HEK293 (cell line): ENCODE measurements at regions of chr1 and their contacts with region 1.

Region 1: GRCh38 chr1:162357681-162358266 is 18.9 kb downstream of the SPATA46 start:
- H3K4me3 ChIP-seq: no peak overlapping the region
- H3K27ac ChIP-seq: no peak overlapping the region
- H3K4me1 ChIP-seq: no peaks in the 10 kb centered on the region
- CTCF ChIP-seq: peak; percentile 16; the same call in 1 of the 2 replicates

Region 2: DNA sequence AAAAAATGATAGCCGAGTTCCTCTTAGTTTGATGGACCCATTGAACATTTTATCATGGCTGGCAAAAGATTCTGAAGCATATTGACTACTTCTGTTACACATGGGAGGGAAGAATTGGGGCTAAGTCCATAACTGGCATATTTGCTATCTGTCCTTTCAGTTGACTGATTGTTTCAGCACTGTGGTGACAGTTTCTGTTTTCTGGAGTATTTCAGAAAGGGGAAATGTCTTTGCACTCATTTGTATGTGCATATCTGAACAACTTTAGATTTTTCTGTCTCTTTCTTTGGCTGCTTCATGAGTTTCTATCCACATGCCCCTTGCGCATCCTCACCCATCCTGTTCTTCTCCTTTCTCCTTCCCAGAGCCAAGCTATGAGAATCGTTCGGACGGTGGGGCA is 14.3 kb before region 1 on chr1:
- CTCF ChIA-PET with region 1: interaction called, 12 read pairs
- POLR2A ChIA-PET with region 1: no interaction called
- H3K4me3 ChIP-seq: no peak overlapping the region
- H3K27ac ChIP-seq: no peak overlapping the region
- H3K4me1 ChIP-seq: no peaks in the 10 kb centered on the region; the same call in 1 of the 2 replicates
- CTCF ChIP-seq: no peak

Region 3: GRCh38 chr1:162376691-162377090 is 18.9 kb after region 1 on chr1 and contains the start of gene SPATA46:
- CTCF ChIA-PET with region 1: interaction called, 12 read pairs
- POLR2A ChIA-PET with region 1: no interaction called
- H3K4me3 ChIP-seq: no peak within 1 kb of the TSS
- H3K27ac ChIP-seq: no peak within 1 kb of the TSS
- H3K4me1 ChIP-seq: no peaks in the 10 kb centered on the region
- CTCF ChIP-seq: no peak

Region 4: DNA sequence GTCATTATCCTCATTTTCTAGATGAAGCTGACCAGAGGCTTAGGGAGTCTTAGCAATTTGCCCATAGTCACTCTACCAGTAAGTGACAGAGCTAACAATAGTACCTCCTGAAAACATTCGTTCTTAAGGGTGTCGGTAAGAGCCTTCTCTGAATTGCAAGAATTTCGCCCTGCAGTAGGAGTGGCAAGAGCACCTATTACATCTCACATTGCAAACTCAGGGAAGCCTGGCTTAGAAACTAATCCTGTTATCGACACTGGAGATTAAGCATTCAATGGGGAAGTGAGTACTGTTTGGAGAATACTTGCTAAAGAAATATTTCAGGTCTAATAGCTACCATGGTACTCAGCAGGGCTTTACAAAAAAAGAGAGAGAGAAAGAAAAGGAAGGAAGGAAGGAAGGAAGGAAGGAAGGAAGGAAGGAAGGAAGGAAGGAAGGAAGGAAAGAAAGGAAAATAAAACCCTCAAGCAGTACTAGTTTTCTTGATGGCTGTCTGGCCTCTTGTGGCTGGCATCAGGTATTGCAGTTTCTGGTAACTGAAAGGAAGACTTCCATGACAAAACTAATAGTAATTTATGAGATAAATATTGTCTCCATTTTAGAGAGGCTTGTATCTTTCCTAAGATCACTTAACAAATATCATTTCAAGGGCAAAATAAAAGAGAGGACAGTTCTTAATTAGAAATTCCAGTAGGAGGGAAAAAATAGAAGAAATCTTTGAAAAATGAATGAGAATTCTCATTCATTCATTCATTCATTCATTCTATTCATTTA is 34.2 kb after region 1 on chr1:
- CTCF ChIA-PET with region 1: interaction called, 10 read pairs
- POLR2A ChIA-PET with region 1: no interaction called
- H3K4me3 ChIP-seq: no peak overlapping the region
- H3K27ac ChIP-seq: no peak overlapping the region
- H3K4me1 ChIP-seq: no peaks in the 10 kb centered on the region
- CTCF ChIP-seq: peak; percentile 45; the same call in 1 of the 2 replicates